GM12878 (cell line): ENCODE measurements at regions of chr3 and their contacts with region 1.

Region 1: DNA sequence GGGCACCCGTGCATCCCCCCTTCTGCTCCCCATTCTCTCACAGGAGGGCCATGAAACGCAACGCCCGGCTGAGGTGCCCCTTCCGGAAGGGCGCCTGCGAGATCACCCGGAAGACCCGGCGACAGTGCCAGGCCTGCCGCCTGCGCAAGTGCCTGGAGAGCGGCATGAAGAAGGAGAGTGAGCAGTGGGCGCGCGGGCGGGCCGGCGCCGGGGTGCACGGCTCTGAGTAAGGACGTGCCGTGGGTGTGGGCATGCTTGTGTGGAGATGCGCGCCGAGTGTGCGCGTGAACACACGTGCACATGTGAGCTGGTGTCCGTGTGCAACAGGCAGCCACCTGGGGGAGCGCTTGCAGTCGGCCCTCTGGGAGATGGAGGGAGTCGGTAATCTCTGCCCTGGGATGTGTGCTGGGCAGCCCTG is 28.1 kb downstream of the NR1I2 start:
- DNase-seq: peak; percentile 35
- ATAC-seq: peak; percentile 90
- H3K4me3 ChIP-seq: peak overlapping the region; percentile 79
- H3K27ac ChIP-seq: peak overlapping the region; percentile 70
- H3K4me1 ChIP-seq: peaks cover 10% of the 10 kb centered on the region
- H3K27me3 ChIP-seq: no peaks in the 10 kb centered on the region
- CTCF ChIP-seq: peak; percentile 46 to 62 (median 47); a peak in 5 of 6 replicates
- EP300 ChIP-seq: no peak
- POLR2A ChIP-seq: peak; percentile 76
- RAD21 ChIP-seq: peak; percentile 38; the same call in 1 of the 2 replicates

Region 2: DNA sequence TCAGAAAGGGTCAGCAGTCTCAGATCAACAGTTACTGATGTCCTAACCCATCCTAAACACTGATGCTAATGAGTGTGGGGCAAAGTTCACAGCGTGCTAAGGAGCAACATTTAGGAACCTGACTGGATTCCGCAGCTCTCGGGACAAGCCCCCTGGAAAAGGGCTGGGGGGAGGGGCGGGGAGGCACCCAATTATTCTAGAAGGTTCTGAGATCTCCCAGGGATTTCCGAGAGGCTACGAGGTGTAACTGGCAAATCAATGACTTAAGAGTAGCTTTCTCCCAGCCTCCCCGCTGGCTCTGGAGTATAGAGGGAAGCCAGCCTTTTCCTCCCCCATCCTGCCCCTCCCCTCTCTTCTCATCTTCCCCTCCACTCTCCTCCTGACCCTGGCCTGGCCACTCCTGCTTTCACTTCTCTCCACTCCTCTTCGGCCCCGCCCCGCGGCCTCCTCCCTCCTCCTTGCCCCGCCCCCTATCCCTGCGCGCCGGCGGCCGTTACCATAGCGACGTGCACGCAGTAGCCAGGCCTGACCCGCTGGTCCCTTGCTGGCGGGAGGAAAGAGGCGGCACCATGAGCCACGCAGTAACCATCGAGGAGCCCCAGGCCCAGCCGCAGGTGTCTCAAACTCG is 107.4 kb before region 1 on chr3 and contains the start of gene CFAP91:
- CTCF ChIA-PET with region 1: no interaction called
- POLR2A ChIA-PET with region 1: no interaction called
- RAD21 ChIA-PET with region 1: no interaction called
- SMC1A ChIA-PET with region 1: interaction called, 4 read pairs
- in situ Hi-C with region 1: no loop called
- intact Hi-C with region 1: loop called (anchors 1 kb)
- DNase-seq: peak; percentile 52
- ATAC-seq: peak; percentile 87
- H3K4me3 ChIP-seq: peak within 1 kb of the TSS; percentile 38; the same call in 1 of the 2 replicates
- H3K27ac ChIP-seq: peak within 1 kb of the TSS; percentile 30; the same call in 1 of the 2 replicates
- H3K4me1 ChIP-seq: peaks cover 31% of the 10 kb centered on the region
- H3K27me3 ChIP-seq: no peaks in the 10 kb centered on the region
- CTCF ChIP-seq: no peak
- EP300 ChIP-seq: no peak
- POLR2A ChIP-seq: no peak
- RAD21 ChIP-seq: no peak
- polyA plus RNA-seq, gene CFAP91: 0.03 to 0.22 TPM

Region 3: DNA sequence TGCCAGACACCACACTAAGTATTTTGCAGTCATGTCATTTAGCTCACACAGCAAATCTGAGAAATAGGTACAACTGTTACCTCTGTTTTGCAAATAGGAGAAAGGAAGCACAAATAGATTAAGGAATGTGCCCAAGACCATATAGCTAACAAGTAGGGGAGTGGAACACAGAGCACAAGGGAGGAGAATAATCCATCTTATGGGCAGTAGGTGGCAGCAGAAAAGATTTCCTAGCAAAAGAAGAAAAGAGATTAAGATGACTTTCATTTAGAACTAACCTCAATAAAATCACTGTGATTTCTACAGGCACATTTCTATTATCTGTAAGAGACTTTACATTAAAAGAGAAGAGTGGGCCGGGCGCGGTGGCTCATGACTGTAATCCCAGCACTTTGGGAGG is 21.0 kb after region 1 on chr3:
- CTCF ChIA-PET with region 1: interaction called, 12 read pairs
- POLR2A ChIA-PET with region 1: interaction called, 3 read pairs
- RAD21 ChIA-PET with region 1: no interaction called
- SMC1A ChIA-PET with region 1: interaction called, 3 read pairs
- in situ Hi-C with region 1: no loop called
- intact Hi-C with region 1: loop called (anchors 2 kb)
- DNase-seq: no peak
- ATAC-seq: 0 out of 3 replicates have a peak, but pooled peaks have one; percentile 44
- H3K4me3 ChIP-seq: no peak overlapping the region
- H3K27ac ChIP-seq: no peak overlapping the region
- H3K4me1 ChIP-seq: no peaks in the 10 kb centered on the region
- H3K27me3 ChIP-seq: no peaks in the 10 kb centered on the region
- CTCF ChIP-seq: peak in 1 of 3 experiments; percentile 24; a peak in 2 of 6 replicates
- EP300 ChIP-seq: no peak
- POLR2A ChIP-seq: no peak
- RAD21 ChIP-seq: 0 out of 2 replicates have a peak, but pooled peaks have one; percentile 1

Region 4: DNA sequence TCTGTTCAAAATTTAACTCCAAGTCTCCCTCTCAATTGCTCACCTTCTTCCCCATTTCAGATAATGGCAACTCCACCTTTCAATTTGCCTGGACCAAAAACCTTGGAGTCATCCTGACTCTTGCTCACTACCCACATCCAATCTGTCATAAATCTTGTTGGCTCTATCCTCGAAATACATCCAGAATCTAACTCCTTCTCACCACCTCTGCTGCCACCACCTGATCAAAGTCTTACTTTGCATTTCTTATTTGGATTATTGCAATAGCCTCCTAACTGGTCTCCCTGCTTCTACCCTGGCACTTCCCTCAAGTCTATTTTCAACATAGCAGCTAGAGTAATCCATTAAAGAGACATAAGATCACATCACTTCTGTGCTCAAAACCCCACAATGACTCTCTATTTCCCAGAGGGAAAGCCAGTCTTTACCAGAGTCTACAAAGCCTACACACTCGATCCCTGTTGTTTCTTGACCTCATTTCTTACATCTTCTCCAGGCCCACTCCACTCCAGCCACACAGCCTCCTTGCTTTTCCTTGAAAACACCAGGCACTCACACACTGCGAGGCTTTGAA is 388.4 kb after region 1 on chr3:
- CTCF ChIA-PET with region 1: no interaction called
- POLR2A ChIA-PET with region 1: no interaction called
- RAD21 ChIA-PET with region 1: no interaction called
- SMC1A ChIA-PET with region 1: interaction called, 4 read pairs
- in situ Hi-C with region 1: no loop called
- intact Hi-C with region 1: loop called (anchors 5 kb)
- DNase-seq: no peak
- ATAC-seq: peak; percentile 58
- H3K4me3 ChIP-seq: no peak overlapping the region
- H3K27ac ChIP-seq: no peak overlapping the region
- H3K4me1 ChIP-seq: no peaks in the 10 kb centered on the region
- H3K27me3 ChIP-seq: no peaks in the 10 kb centered on the region
- CTCF ChIP-seq: peak in 2 of 3 experiments; percentile 24 to 60; a peak in 3 of 6 replicates
- EP300 ChIP-seq: no peak
- POLR2A ChIP-seq: no peak
- RAD21 ChIP-seq: peak; percentile 60